Posterior vena cava (tissue), 2 donors: ENCODE measurements at regions of chr7 and their contacts with region 1.

Region 1: DNA sequence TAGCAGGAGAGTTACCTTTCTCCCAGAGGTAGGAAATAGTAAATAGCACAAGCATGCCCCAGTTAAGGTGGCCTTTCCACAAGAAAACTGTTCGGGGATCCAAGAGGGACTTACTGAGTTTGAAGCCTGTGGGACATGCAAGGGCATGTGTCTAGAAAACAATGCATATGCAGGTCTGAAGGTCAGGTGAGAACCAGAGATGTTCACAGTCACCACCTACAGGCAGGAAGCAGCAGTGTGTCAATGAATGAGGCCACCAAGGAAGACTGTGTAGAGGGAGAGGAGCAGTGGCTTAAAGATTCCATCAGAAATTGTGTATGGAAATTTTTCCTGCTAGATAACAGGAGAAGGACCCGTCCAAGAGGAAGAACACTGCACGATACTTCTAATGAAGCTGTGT is 66.0 kb downstream of the CALD1 start:
- DNase-seq: no peak

Region 2: GRCh38 chr7:134737566-134738345 is 107.7 kb before region 1 on chr7:
- intact Hi-C with region 1: no loop called
- DNase-seq: no peak

Region 3: DNA sequence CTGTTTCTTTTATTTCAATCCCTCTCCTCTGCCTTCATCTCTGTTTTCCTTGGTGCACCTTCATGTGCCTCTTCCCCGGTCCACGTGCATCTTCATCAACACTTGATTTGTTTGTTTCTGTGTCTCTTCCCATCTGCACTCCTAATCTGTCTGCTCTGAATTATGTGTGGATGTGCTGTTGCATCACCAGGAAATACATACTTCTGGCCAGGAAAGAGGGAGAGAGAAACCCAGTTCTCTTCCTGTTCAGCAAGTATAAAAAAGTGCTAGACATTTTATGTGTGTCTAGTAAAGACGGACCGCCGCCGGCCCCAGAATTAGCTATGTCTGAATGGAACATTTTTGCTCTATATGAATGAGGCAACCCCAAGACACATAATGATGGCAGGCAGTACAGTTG is 27.8 kb after region 1 on chr7:
- intact Hi-C with region 1: loop called in 1 of 2 experiments (anchors 2 kb)
- DNase-seq: no peak